Naive thymus-derived CD4-positive, alpha-beta T cell (primary cell): ENCODE measurements at regions of chr5 and their contacts with region 1.

Region 1: DNA sequence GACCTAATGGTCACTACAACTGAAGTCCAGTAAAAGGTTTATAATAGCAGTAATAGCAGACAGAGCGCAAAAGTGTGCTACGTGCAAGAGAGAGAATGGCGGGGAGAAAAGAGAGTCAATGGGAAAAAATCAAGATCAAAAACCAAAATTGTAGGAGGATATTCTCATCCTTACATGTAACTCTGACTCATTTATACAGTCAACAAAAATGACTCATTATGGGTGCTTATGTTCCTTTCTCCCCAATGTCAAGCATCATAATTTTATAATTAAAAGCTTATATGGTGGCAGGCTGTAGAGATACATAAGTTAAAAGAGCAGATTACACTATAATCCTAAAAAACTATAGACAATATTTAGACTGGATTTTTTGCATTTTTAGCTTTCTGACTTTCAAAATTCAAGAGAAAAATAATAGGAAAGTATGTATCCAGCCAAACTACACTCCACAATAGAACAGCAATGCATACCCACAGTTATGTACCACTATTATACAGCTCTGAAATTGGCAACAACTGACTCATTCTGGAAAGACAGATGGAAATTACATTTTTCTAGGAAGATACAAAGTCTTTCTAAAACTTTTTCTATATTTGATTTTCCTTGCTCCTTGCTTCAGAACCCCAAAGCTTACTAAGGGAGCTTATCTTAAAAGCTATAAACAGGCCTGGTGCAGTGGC is 78.4 kb downstream of the PLPP1 start:
- DNase-seq: no peak
- ATAC-seq: no peak
- H3K4me3 ChIP-seq: no peak overlapping the region
- H3K4me3 Mint-ChIP-seq: no peak overlapping the region
- H3K27ac ChIP-seq: no peak overlapping the region
- H3K27ac Mint-ChIP-seq: no peak overlapping the region
- H3K4me1 ChIP-seq: no peaks in the 10 kb centered on the region
- H3K4me1 Mint-ChIP-seq: peaks cover under 1 to 20% (median 5%) of the 10 kb centered on the region in 7 donors
- H3K27me3 ChIP-seq: no peaks in the 10 kb centered on the region
- H3K27me3 Mint-ChIP-seq: no peaks in the 10 kb centered on the region

Region 2: GRCh38 chr5:55407059-55407684 is 49.2 kb before region 1 on chr5:
- CTCF ChIA-PET with region 1: no interaction called
- POLR2A ChIA-PET with region 1: no interaction called
- intact Hi-C with region 1: no loop called
- DNase-seq: peak in 6 of 9 donors; percentile 4 to 34 (median 16)
- ATAC-seq: peak; percentile 42
- H3K4me3 ChIP-seq: no peak overlapping the region
- H3K4me3 Mint-ChIP-seq: no peak overlapping the region
- H3K27ac ChIP-seq: no peak overlapping the region
- H3K27ac Mint-ChIP-seq: peak overlapping the region in 2 of 9 donors; percentile 20 to 36
- H3K4me1 ChIP-seq: no peaks in the 10 kb centered on the region
- H3K4me1 Mint-ChIP-seq: peaks cover 6 to 23% (median 12%) of the 10 kb centered on the region in 7 donors
- H3K27me3 ChIP-seq: no peaks in the 10 kb centered on the region
- H3K27me3 Mint-ChIP-seq: no peaks in the 10 kb centered on the region

Region 3: GRCh38 chr5:55521881-55522280 is 65.5 kb after region 1 on chr5:
- CTCF ChIA-PET with region 1: no interaction called
- POLR2A ChIA-PET with region 1: no interaction called
- intact Hi-C with region 1: loop called in 1 of 2 experiments (anchors 10 kb)
- DNase-seq: no peak
- ATAC-seq: no peak
- H3K4me3 ChIP-seq: no peak overlapping the region
- H3K4me3 Mint-ChIP-seq: no peak overlapping the region
- H3K27ac ChIP-seq: no peak overlapping the region
- H3K27ac Mint-ChIP-seq: no peak overlapping the region
- H3K4me1 ChIP-seq: no peaks in the 10 kb centered on the region
- H3K4me1 Mint-ChIP-seq: peaks cover 4 to 29% (median 14%) of the 10 kb centered on the region in 7 donors
- H3K27me3 ChIP-seq: no peaks in the 10 kb centered on the region
- H3K27me3 Mint-ChIP-seq: no peaks in the 10 kb centered on the region

Region 4: DNA sequence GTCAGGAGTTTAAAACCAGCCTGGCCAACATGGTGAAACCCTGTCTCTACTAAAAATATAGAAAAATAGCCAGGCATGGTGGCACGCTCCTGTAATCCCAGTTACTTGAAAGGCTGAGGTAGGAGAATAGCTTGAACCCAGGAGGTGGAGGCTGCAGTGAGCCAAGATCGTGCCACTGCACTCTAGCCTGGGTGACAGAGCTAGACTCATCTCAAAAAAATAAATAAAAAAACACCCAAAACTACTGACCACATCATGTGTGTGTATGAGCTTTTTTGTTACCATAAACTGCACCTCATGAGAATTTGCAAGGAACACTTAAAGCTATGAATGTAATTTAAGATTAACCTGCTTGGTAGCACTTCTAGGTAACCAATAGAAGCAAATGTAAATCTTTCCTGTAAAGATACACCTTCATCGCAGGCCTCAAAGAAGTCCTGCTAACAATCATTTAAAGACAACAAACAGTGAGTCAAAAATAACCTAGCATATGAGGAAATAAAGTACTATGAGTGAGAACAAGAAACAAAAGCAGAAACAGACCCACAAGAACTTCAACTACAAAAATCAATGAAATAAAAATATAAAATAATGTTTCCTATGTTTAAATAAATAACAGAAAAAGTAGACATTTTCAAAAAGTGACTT is 242.8 kb after region 1 on chr5:
- CTCF ChIA-PET with region 1: no interaction called
- POLR2A ChIA-PET with region 1: no interaction called
- intact Hi-C with region 1: no loop called
- DNase-seq: no peak
- ATAC-seq: no peak
- H3K4me3 ChIP-seq: no peak overlapping the region
- H3K4me3 Mint-ChIP-seq: no peak overlapping the region
- H3K27ac ChIP-seq: no peak overlapping the region
- H3K27ac Mint-ChIP-seq: peak overlapping the region in 1 of 9 donors; percentile 9
- H3K4me1 ChIP-seq: no peaks in the 10 kb centered on the region
- H3K4me1 Mint-ChIP-seq: peaks cover 0 to 28% (median 8%) of the 10 kb centered on the region in 7 donors
- H3K27me3 ChIP-seq: no peaks in the 10 kb centered on the region
- H3K27me3 Mint-ChIP-seq: no peaks in the 10 kb centered on the region